H1 (cell line): ENCODE measurements at regions of chr15 and their contacts with region 1.

Region 1: DNA sequence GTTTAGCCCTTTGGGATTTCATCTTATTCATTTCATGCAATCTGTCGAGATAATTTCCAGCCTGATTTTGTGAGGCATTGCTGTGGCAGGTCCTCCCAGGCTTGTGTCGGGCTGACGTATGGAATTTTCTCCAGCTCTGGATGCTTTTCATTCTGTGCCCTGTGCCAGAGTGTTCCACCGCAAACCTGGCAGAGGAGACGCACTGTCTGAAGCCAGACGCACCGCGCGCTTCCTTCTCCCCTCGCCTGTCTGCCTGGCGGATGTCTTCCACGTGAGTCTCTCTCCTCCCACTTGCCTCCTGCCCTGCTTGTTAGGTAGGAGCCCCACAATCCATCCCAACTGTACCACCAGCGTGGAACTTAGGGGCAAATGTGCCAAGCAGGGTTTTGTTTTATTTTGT is 20.1 kb upstream of the GLCE start:
- DNase-seq: no peak
- H3K4me3 ChIP-seq: no peak overlapping the region
- H3K27ac ChIP-seq: no peak overlapping the region
- H3K4me1 ChIP-seq: peaks cover 0 to 5% (median 3%) of the 10 kb centered on the region in 4 experiments; a peak in 3 of 7 replicates
- H3K27me3 ChIP-seq: no peaks in the 10 kb centered on the region; a peak in 1 of 7 replicates
- CTCF ChIP-seq: no peak
- EP300 ChIP-seq: no peak
- POLR2A ChIP-seq: no peak
- RAD21 ChIP-seq: no peak

Region 2: GRCh38 chr15:69067296-69067695 is 73.0 kb before region 1 on chr15:
- CTCF ChIA-PET with region 1: interaction called, 12 read pairs
- POLR2A ChIA-PET with region 1: no interaction called
- DNase-seq: no peak
- H3K4me3 ChIP-seq: no peak overlapping the region
- H3K27ac ChIP-seq: no peak overlapping the region
- H3K4me1 ChIP-seq: no peaks in the 10 kb centered on the region
- H3K27me3 ChIP-seq: peaks cover 0 to 3% (median 0%) of the 10 kb centered on the region in 4 experiments; a peak in 2 of 7 replicates
- CTCF ChIP-seq: no peak
- EP300 ChIP-seq: no peak
- POLR2A ChIP-seq: no peak
- RAD21 ChIP-seq: no peak

Region 3: GRCh38 chr15:69160141-69160993 is 20.1 kb after region 1 on chr15 and contains the start of gene GLCE:
- CTCF ChIA-PET with region 1: interaction called, 10 read pairs
- POLR2A ChIA-PET with region 1: interaction called, 6 read pairs
- DNase-seq: peak; percentile 91 to 98
- H3K4me3 ChIP-seq: peak within 1 kb of the TSS; percentile 73 to 91 (median 88)
- H3K27ac ChIP-seq: peak within 1 kb of the TSS; percentile 70
- H3K4me1 ChIP-seq: peaks cover 0 to 9% (median 2%) of the 10 kb centered on the region in 4 experiments; a peak in 4 of 7 replicates
- H3K27me3 ChIP-seq: no peaks in the 10 kb centered on the region; a peak in 2 of 7 replicates
- CTCF ChIP-seq: no peak
- EP300 ChIP-seq: peak in 1 of 2 experiments; percentile 42; a peak in 1 of 3 replicates
- POLR2A ChIP-seq: peak; percentile 63 to 93
- RAD21 ChIP-seq: 0 out of 4 replicates have a peak, but pooled peaks of 1 of the 2 experiments have one; percentile 11
- total RNA-seq, gene GLCE: 16.2 and 17.1 TPM in 2 replicates